ENCODE measurements at regions of chrX and their contacts with region 1.

Region 1: DNA sequence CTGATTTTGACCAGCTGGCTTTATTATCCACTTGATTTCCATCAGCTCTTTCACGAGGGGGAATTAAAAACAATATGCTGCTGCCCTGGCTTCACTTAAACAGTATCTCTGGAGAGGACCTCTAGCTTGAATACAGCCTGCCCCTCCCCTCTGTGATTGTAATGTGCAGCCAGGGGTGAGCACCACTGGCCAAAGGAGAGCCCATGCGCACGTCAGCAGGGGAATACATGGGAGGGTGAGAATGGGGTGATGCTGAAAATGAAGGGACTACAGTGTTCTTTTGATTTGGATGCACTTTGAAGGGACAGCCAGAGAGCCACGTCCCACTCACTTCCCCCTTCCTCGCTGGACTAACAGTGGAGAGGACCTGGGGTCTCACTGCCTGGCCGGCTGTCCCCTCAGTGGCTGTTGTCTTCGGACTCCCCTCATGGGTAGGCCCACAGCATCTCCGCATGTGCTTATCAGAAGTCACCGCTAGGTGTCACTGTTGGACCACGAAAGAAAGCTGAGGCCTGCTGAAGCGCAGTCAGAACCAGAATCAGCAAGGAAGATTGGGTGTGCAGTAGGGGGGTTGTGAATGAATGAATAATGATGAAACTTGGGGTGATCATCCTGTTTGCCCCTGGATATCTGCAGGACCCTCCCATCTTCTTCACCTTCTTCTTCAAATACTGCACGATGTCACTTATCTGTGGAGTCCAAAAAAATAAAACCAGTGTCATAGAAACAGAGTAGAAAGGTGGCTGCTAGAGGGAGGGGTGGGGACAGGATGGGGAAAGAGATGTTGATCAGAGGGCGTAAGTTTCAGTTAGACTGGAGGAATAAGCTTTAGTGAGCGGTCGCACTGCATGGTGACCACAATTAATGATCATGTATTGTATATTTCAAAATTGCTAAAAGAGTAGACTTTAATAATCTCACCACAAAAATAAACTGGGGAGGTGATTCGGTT is 32.8 kb downstream of the CLCN4 start:
- DNase-seq: peak; percentile 80
- ATAC-seq: peak; percentile 76
- H3K4me3 ChIP-seq: no peak overlapping the region
- H3K4me3 Mint-ChIP-seq: no peak overlapping the region
- H3K27ac ChIP-seq: no peak overlapping the region
- H3K27ac Mint-ChIP-seq: peak overlapping the region; percentile 32
- H3K4me1 ChIP-seq: no peaks in the 10 kb centered on the region
- H3K4me1 Mint-ChIP-seq: peaks cover 14% of the 10 kb centered on the region
- H3K27me3 ChIP-seq: no peaks in the 10 kb centered on the region
- H3K27me3 Mint-ChIP-seq: no peaks in the 10 kb centered on the region
- CTCF ChIP-seq: peak; percentile 51

Region 2: DNA sequence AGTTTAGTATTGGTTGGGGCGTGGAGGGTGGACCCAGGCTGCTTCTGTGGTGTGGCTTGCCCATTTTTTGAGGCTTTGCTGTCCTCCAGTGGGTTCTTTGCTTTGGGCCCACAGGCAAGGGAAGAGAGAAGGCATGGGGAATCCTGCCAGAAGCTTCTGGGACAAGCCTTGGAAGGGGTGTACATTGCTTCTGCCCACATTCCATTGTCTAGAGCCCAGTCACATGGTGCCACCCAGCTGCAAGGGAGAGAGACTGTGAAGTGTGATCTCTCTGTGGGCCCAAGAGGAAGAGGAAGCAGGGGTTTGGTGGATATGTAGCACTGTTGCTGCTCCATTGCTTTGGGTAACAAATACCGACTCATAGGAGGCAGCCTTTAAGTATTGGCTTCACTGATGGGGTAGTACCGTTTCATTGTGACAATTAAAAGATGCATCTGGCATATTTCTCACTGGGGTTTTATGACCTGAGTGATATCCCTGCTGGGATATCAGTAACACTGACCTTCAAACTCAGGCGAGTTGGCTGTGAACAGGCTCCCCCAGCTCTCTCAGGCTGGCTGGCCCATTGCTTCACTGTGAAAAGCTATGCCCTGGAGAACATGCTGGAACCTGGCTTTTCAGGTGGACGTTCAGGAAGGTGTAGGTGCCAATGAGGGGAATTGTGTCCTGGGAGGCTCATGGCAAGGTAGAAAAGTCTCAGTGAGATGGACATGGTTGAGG is 136.5 kb before region 1 on chrX:
- CTCF ChIA-PET with region 1: no interaction called
- POLR2A ChIA-PET with region 1: no interaction called
- intact Hi-C with region 1: no loop called
- DNase-seq: peak; percentile 25
- ATAC-seq: peak; percentile 78
- H3K4me3 ChIP-seq: no peak overlapping the region
- H3K4me3 Mint-ChIP-seq: peak overlapping the region; percentile 26
- H3K27ac ChIP-seq: peak overlapping the region in 1 of 2 donors; percentile 5
- H3K27ac Mint-ChIP-seq: peak overlapping the region; percentile 75
- H3K4me1 ChIP-seq: peaks cover 16 to 25% of the 10 kb centered on the region in 2 donors
- H3K4me1 Mint-ChIP-seq: peaks cover 56% of the 10 kb centered on the region
- H3K27me3 ChIP-seq: no peaks in the 10 kb centered on the region
- H3K27me3 Mint-ChIP-seq: no peaks in the 10 kb centered on the region
- CTCF ChIP-seq: no peak

Region 3: GRCh38 chrX:10217198-10217597 is 27.6 kb after region 1 on chrX:
- CTCF ChIA-PET with region 1: interaction called, 18 read pairs
- POLR2A ChIA-PET with region 1: no interaction called
- intact Hi-C with region 1: loop called (anchors 1 kb)
- DNase-seq: peak; percentile 9
- ATAC-seq: no peak
- H3K4me3 ChIP-seq: no peak overlapping the region
- H3K4me3 Mint-ChIP-seq: no peak overlapping the region
- H3K27ac ChIP-seq: no peak overlapping the region
- H3K27ac Mint-ChIP-seq: no peak overlapping the region
- H3K4me1 ChIP-seq: peaks cover 0 to 7% of the 10 kb centered on the region in 2 donors
- H3K4me1 Mint-ChIP-seq: peaks cover 12% of the 10 kb centered on the region
- H3K27me3 ChIP-seq: no peaks in the 10 kb centered on the region
- H3K27me3 Mint-ChIP-seq: no peaks in the 10 kb centered on the region
- CTCF ChIP-seq: no peak

Region 4: DNA sequence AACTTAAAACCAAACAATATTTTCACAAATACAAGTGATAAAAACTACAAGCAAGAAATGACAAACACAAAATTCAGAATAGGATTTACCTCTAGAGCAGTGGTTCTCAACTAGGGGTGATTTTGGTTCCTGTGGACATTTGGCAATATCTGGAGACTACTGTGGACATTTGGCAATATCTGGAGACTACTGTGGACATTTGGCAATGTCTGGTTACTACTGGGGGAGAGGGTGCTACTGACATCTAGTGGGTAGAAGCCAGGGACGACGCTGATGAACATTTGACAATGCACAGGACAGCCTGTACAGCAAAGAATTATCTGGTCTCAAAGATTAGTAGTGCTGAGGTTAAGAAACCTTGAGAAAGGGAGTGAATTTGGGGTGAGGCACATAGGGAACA is 137.0 kb after region 1 on chrX:
- CTCF ChIA-PET with region 1: interaction called, 7 read pairs
- POLR2A ChIA-PET with region 1: no interaction called
- intact Hi-C with region 1: loop called (anchors 1 kb)
- DNase-seq: peak; percentile 3
- ATAC-seq: no peak
- H3K4me3 ChIP-seq: no peak overlapping the region
- H3K4me3 Mint-ChIP-seq: no peak overlapping the region
- H3K27ac ChIP-seq: no peak overlapping the region
- H3K27ac Mint-ChIP-seq: no peak overlapping the region
- H3K4me1 ChIP-seq: no peaks in the 10 kb centered on the region
- H3K4me1 Mint-ChIP-seq: no peaks in the 10 kb centered on the region
- H3K27me3 ChIP-seq: peaks cover 0 to 3% (median 0%) of the 10 kb centered on the region in 4 experiments
- H3K27me3 Mint-ChIP-seq: peaks cover 8% of the 10 kb centered on the region
- CTCF ChIP-seq: no peak

Region 5: GRCh38 chrX:10615931-10616775 is 426.6 kb after region 1 on chrX:
- CTCF ChIA-PET with region 1: interaction called, 96 read pairs
- POLR2A ChIA-PET with region 1: no interaction called
- intact Hi-C with region 1: loop called (anchors 1 kb)
- DNase-seq: peak; percentile 56
- ATAC-seq: peak; percentile 58
- H3K4me3 ChIP-seq: no peak overlapping the region
- H3K4me3 Mint-ChIP-seq: no peak overlapping the region
- H3K27ac ChIP-seq: no peak overlapping the region
- H3K27ac Mint-ChIP-seq: no peak overlapping the region
- H3K4me1 ChIP-seq: peaks cover 7 to 19% of the 10 kb centered on the region in 2 donors
- H3K4me1 Mint-ChIP-seq: peaks cover 12% of the 10 kb centered on the region
- H3K27me3 ChIP-seq: peaks cover 0 to 31% (median 24%) of the 10 kb centered on the region in 4 experiments
- H3K27me3 Mint-ChIP-seq: peaks cover 24% of the 10 kb centered on the region
- CTCF ChIP-seq: peak; percentile 73

Region 6: DNA sequence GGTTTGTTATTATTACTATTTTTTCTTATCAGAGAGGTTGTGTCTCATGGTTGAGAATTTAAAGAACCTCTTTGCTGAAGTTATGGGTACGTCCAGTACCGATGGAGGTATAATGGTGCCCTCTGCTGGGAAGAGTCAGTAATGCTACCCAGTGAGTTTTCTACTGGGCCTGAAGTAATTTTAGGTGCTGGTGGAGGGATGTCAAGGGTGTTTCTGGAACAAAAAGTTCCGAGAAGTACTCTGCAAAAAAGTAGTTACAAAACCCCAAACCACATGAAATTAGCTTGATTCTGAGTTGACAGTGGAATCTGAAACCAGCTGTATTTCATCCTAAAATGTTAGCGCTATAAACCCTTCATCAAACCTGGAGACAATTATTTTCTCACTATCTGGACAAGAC is 533.3 kb after region 1 on chrX:
- CTCF ChIA-PET with region 1: interaction called, 130 read pairs
- POLR2A ChIA-PET with region 1: no interaction called
- intact Hi-C with region 1: loop called (anchors 1 kb)
- DNase-seq: peak; percentile 54
- ATAC-seq: peak; percentile 62
- H3K4me3 ChIP-seq: no peak overlapping the region
- H3K4me3 Mint-ChIP-seq: no peak overlapping the region
- H3K27ac ChIP-seq: no peak overlapping the region
- H3K27ac Mint-ChIP-seq: no peak overlapping the region
- H3K4me1 ChIP-seq: no peaks in the 10 kb centered on the region
- H3K4me1 Mint-ChIP-seq: no peaks in the 10 kb centered on the region
- H3K27me3 ChIP-seq: peaks cover 0 to 3% (median 0%) of the 10 kb centered on the region in 4 experiments
- H3K27me3 Mint-ChIP-seq: no peaks in the 10 kb centered on the region
- CTCF ChIP-seq: peak; percentile 64

Region 7: GRCh38 chrX:10769195-10769594 is 579.6 kb after region 1 on chrX:
- CTCF ChIA-PET with region 1: interaction called, 16 read pairs
- POLR2A ChIA-PET with region 1: no interaction called
- intact Hi-C with region 1: no loop called
- DNase-seq: peak; percentile 5
- ATAC-seq: no peak
- H3K4me3 ChIP-seq: no peak overlapping the region
- H3K4me3 Mint-ChIP-seq: no peak overlapping the region
- H3K27ac ChIP-seq: no peak overlapping the region
- H3K27ac Mint-ChIP-seq: no peak overlapping the region
- H3K4me1 ChIP-seq: no peaks in the 10 kb centered on the region
- H3K4me1 Mint-ChIP-seq: no peaks in the 10 kb centered on the region
- H3K27me3 ChIP-seq: peaks cover 0 to 3% (median 0%) of the 10 kb centered on the region in 4 experiments
- H3K27me3 Mint-ChIP-seq: no peaks in the 10 kb centered on the region
- CTCF ChIP-seq: peak; percentile 53